ENCODE measurements at regions of chr13 and their contacts with region 1.

Region 1: GRCh38 chr13:98653463-98653985 is 76.6 kb upstream of the STK24 start:
- DNase-seq: peak; percentile 72 to 80 (median 75)
- H3K4me3 ChIP-seq: peak overlapping the region in 3 of 7 experiments; percentile 11 to 63 (median 36)
- H3K27ac ChIP-seq: no peak overlapping the region
- H3K4me1 ChIP-seq: peaks cover 0 to 3% (median 0%) of the 10 kb centered on the region in 4 experiments
- H3K27me3 ChIP-seq: peaks cover 0 to 4% (median 0%) of the 10 kb centered on the region in 5 experiments

Region 2: GRCh38 chr13:98445340-98446233 is 207.9 kb before region 1 on chr13:
- CTCF ChIA-PET with region 1: interaction called, 86 read pairs
- POLR2A ChIA-PET with region 1: no interaction called
- DNase-seq: peak; percentile 60 to 75 (median 73)
- H3K4me3 ChIP-seq: peak overlapping the region in 2 of 7 experiments; percentile 34 to 69
- H3K27ac ChIP-seq: no peak overlapping the region
- H3K4me1 ChIP-seq: peaks cover 0 to 21% (median 9%) of the 10 kb centered on the region in 4 experiments
- H3K27me3 ChIP-seq: no peaks in the 10 kb centered on the region

Region 3: GRCh38 chr13:98454389-98454881 is 199.1 kb before region 1 on chr13:
- CTCF ChIA-PET with region 1: interaction called, 25 read pairs
- POLR2A ChIA-PET with region 1: interaction called, 6 read pairs
- DNase-seq: peak; percentile 39 to 56 (median 42)
- H3K4me3 ChIP-seq: peak overlapping the region in 3 of 7 experiments; percentile 5 to 58 (median 7)
- H3K27ac ChIP-seq: no peak overlapping the region
- H3K4me1 ChIP-seq: peaks cover 0 to 17% (median 11%) of the 10 kb centered on the region in 4 experiments
- H3K27me3 ChIP-seq: no peaks in the 10 kb centered on the region

Region 4: DNA sequence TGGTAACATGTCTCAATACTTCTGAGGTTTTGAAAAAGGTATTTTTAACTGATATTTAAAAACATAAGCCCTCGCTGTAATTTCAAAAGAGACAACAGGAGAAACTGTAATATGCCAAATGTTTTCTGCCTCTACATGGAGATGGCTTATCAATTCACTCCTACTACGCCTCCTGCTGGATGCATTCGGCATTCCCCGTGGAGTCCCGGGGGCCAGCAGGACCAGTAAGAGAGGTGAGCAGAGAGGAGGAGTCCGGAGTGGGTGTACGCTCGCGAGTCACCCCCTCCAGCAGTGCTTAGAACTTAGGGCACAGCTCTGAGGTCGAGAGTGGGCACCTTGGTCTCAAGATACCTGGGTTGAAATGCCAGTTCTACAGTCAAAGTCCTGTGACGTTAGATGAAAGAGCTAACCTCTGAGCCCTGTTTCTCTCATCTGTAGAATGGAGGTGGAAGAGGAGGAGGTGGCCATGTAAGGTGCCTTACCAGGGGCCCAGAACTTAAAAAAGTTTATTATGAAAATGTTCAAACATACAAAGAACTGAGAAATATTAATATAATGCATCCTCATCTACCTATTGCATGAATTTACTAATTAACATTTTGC is 186.8 kb before region 1 on chr13:
- CTCF ChIA-PET with region 1: interaction called, 25 read pairs
- POLR2A ChIA-PET with region 1: no interaction called
- DNase-seq: peak; percentile 38 to 50 (median 47)
- H3K4me3 ChIP-seq: no peak overlapping the region
- H3K27ac ChIP-seq: no peak overlapping the region
- H3K4me1 ChIP-seq: no peaks in the 10 kb centered on the region
- H3K27me3 ChIP-seq: no peaks in the 10 kb centered on the region

Region 5: GRCh38 chr13:98484289-98485219 is 169.0 kb before region 1 on chr13:
- CTCF ChIA-PET with region 1: interaction called, 29 read pairs
- POLR2A ChIA-PET with region 1: no interaction called
- DNase-seq: peak; percentile 44 to 84 (median 78)
- H3K4me3 ChIP-seq: no peak overlapping the region
- H3K27ac ChIP-seq: no peak overlapping the region
- H3K4me1 ChIP-seq: peaks cover 5 to 52% (median 20%) of the 10 kb centered on the region in 4 experiments
- H3K27me3 ChIP-seq: no peaks in the 10 kb centered on the region

Region 6: GRCh38 chr13:98672944-98673545 is 19.5 kb after region 1 on chr13:
- CTCF ChIA-PET with region 1: interaction called, 14 read pairs
- POLR2A ChIA-PET with region 1: no interaction called
- DNase-seq: peak; percentile 54 to 73 (median 69)
- H3K4me3 ChIP-seq: no peak overlapping the region
- H3K27ac ChIP-seq: no peak overlapping the region
- H3K4me1 ChIP-seq: no peaks in the 10 kb centered on the region
- H3K27me3 ChIP-seq: peaks cover 0 to 8% (median 5%) of the 10 kb centered on the region in 5 experiments

Region 7: DNA sequence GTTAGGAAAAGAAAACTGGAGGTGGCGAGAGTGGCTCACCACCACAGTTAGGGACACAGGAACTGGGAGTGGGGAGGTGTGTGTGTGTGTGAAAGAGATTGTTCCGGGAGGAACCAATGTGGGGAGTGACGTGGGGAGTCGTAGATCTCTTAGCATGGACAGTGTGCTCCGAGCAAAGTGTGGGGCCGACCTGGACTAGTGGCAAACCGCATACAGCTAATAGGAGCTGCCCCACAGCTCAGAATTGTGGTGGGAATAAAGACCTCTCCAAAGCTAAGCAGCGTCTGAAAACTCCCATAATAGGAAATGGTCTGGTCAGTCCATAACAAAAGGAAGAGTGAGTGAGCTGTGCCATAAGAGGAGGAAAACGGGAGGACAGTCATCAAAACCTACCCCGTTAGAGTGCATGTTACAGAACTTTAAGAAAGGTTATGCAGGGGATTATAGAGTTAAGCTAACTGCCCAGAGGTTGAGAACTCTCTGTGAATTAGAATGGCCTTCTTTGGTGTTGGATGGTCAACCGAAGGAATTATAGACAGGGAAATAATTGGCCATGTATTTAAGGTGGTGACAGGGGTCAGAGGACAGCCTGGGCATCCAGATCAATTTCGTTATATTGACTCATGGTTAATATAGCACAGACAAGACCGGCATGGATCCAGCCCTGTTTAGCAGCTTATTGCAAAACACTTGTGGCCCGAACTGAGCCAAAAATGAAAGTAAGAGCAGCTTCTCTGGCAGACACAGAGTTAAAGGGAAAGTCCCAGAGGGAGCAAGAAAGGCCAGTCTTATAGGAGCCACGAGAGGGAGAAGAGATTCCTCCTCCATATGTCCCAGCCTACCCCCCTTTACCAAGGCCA is 107.8 kb after region 1 on chr13:
- CTCF ChIA-PET with region 1: no interaction called
- POLR2A ChIA-PET with region 1: no interaction called
- DNase-seq: peak; percentile 6 to 33 (median 19)
- H3K4me3 ChIP-seq: peak overlapping the region in 2 of 7 experiments; percentile 42 to 68
- H3K27ac ChIP-seq: no peak overlapping the region
- H3K4me1 ChIP-seq: no peaks in the 10 kb centered on the region
- H3K27me3 ChIP-seq: peaks cover 0 to 13% (median 4%) of the 10 kb centered on the region in 5 experiments

Measured in common myeloid progenitor, CD34-positive (primary cell).